ENCODE measurements at regions of chr3 and their contacts with region 1.

Region 1: DNA sequence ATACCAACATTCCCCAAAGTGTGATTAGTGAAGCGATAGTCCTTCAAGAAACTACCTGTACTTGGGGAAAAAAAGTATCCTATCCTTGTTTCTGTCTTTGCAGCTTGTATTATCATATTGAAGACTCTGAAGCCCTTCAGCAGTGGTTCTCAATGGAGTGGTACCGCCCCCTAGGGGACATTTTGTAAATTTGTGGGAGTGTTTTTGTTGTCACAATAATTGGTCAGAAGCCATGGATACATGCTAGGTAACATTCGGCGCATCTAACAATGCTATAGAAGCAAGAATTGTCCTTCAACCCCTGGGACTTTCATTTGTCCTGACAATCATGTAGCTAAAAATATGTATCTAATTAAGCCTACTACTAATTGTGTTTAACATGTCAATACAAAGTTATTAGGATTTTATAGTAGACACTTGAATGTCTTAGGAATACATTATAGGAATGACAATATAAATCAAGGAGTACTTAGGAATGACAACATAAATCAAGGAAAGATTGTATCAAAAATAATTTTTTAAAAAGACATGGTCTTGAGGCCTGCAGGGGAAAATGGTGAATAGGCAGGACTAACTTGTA is 53.7 kb downstream of the NMD3 start:
- DNase-seq: peak; percentile 36 to 74
- H3K4me3 ChIP-seq: no peak overlapping the region
- H3K4me1 ChIP-seq: no peaks in the 10 kb centered on the region
- H3K27me3 ChIP-seq: no peaks in the 10 kb centered on the region

Region 2: DNA sequence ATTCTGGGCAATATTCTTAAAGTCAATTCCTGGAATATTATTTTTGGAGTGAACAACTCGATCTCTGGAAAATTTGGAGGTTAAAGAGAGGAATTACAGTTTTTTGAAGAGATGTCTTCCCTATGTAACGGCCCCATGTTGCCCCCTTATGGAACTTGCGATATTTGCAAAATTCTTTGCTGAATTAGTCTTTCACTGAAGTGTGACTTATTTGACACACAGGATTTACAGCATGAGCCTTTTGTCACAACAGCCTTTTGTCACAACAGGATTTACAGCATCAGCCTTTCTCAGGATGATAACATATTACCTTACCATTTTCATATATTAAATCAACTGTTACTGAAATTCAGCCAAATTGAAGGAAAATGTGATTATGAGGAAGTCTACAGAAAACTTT is 134.3 kb after region 1 on chr3:
- in situ Hi-C with region 1: loop called (anchors 10 kb)
- DNase-seq: peak; percentile 62 to 68
- H3K4me3 ChIP-seq: no peak overlapping the region
- H3K4me1 ChIP-seq: no peaks in the 10 kb centered on the region
- H3K27me3 ChIP-seq: no peaks in the 10 kb centered on the region

Region 3: GRCh38 chr3:161672478-161672877 is 397.7 kb after region 1 on chr3:
- in situ Hi-C with region 1: no loop called
- DNase-seq: no peak
- H3K4me3 ChIP-seq: no peak overlapping the region
- H3K4me1 ChIP-seq: peaks cover 24% of the 10 kb centered on the region
- H3K27me3 ChIP-seq: no peaks in the 10 kb centered on the region

Measured in HAP-1 (cell line).